Psoas muscle (tissue), 8 donors: ENCODE measurements at regions of chr5 and their contacts with region 1.

Region 1: GRCh38 chr5:119943148-119943547 is 313.8 kb downstream of the FAM170A start:
- DNase-seq: no peak
- ATAC-seq: no peak
- H3K4me3 ChIP-seq: no peak overlapping the region
- H3K27ac ChIP-seq: no peak overlapping the region
- H3K4me1 ChIP-seq: no peaks in the 10 kb centered on the region
- H3K27me3 ChIP-seq: no peaks in the 10 kb centered on the region
- CTCF ChIP-seq: peak; percentile 23

Region 2: DNA sequence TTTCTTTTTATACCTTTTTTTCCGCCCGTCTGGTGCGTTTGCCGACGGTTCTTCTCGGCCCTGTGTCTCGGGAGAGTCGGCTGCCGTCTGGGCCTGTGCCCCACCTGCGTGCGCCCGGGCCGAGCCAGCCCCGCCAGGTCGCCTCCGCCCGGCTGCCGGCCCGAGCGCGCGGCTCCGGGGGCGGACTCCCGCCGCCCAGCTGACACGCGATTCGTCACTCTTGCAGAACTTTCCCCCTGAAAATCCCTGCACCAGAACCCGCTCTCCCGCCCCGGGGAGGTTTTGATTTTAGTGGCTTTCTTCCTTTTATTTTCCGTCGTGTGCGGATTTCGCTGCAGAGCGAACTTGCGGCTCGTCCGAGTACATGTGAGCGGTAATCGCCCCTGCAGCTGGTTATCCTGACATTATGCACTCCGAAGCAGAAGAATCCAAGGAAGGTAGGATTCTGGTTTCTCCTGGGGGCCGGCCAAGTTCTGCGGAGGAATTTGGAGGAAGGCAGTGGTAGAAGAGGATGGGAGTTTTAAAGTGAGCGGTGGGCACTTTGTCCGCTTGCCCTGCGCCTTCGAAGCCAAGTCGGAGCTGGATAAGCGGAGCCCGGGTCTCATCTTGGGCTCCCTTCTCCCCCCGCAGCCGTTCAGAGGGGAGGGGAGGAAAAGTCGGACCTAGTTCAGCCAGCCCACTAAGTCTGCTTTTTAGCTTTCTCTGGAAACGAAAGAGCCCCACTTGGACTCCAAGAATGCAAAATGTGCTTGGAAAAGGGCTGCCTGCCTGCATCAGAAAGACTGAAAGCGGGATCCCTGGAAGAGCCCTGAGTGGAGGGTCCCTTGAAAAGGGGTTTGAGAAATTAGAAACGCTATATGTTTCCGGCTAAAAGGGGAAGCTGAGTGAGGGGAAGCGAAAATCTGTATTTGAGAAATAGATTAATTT is 587.2 kb before region 1 on chr5 and contains the start of gene TNFAIP8:
- intact Hi-C with region 1: no loop called
- DNase-seq: peak; percentile 39 to 68
- ATAC-seq: peak; percentile 47 to 86 (median 70)
- H3K4me3 ChIP-seq: peak within 1 kb of the TSS; percentile 64
- H3K27ac ChIP-seq: no peak within 1 kb of the TSS
- H3K4me1 ChIP-seq: no peaks in the 10 kb centered on the region
- H3K27me3 ChIP-seq: peaks cover 0 to 6% (median 0%) of the 10 kb centered on the region in 3 donors
- CTCF ChIP-seq: no peak
- total RNA-seq, gene TNFAIP8: 0.73 to 2.5 (median 2.1) TPM

Region 3: DNA sequence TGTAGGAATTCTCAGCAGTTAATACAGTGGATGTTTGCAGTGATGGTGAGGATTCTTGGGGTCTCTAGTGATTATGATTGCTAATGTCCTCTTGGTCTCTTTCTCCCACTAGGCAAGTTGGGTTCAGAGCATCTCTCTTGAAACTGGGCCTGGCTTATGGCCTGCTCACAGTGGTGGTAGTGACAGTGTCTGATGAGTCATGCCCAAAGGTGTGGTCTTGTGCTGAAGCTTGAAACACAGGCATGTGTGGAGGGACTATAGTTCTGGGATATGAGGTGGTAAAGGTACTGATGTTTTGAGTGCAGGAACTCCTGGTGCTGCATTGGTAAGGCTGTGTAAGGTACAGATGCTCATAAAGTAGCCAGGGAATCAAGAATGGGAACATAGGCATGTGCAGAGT is 82.7 kb before region 1 on chr5:
- intact Hi-C with region 1: no loop called
- DNase-seq: no peak
- ATAC-seq: no peak
- H3K4me3 ChIP-seq: no peak overlapping the region
- H3K27ac ChIP-seq: no peak overlapping the region
- H3K4me1 ChIP-seq: no peaks in the 10 kb centered on the region
- H3K27me3 ChIP-seq: no peaks in the 10 kb centered on the region
- CTCF ChIP-seq: no peak

Region 4: DNA sequence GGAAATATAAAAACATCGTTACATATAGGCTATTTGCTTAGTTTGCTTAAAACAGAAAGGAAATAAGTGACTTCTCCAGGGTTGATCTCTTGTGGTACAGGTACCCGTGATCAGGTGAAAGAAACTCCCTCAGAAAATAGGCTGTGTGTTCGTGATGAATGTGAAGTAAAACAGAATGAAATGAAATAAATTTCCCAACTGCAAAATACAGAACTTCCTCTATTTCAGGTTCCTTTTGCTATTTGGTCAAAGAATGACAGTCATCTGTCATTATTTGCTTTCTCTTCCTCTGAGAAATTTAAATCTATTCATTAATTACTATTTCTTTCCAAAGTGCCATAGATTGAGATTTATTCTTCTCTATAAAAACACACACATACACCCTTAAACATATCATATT is 94.3 kb after region 1 on chr5:
- intact Hi-C with region 1: no loop called
- DNase-seq: no peak
- ATAC-seq: no peak
- H3K4me3 ChIP-seq: no peak overlapping the region
- H3K27ac ChIP-seq: no peak overlapping the region
- H3K4me1 ChIP-seq: no peaks in the 10 kb centered on the region
- H3K27me3 ChIP-seq: no peaks in the 10 kb centered on the region
- CTCF ChIP-seq: no peak

Region 5: GRCh38 chr5:120803282-120803681 is 860.1 kb after region 1 on chr5:
- intact Hi-C with region 1: loop called in 1 of 2 experiments (anchors 10 kb)
- DNase-seq: no peak
- ATAC-seq: no peak
- H3K4me3 ChIP-seq: no peak overlapping the region
- H3K27ac ChIP-seq: no peak overlapping the region
- H3K4me1 ChIP-seq: peaks cover 7% of the 10 kb centered on the region
- H3K27me3 ChIP-seq: no peaks in the 10 kb centered on the region
- CTCF ChIP-seq: peak; percentile 15